ENCODE measurements at regions of chr16 and their contacts with region 1.

Region 1: GRCh38 chr16:78503602-78504001 is 404.1 kb downstream of the WWOX start:
- DNase-seq: peak in 3 of 10 donors; percentile 55 to 66 (median 57)

Region 2: GRCh38 chr16:78122774-78123315 is 380.8 kb before region 1 on chr16:
- intact Hi-C with region 1: loop called (anchors 10 kb)
- DNase-seq: peak in 2 of 10 donors; percentile 37 to 49

Region 3: DNA sequence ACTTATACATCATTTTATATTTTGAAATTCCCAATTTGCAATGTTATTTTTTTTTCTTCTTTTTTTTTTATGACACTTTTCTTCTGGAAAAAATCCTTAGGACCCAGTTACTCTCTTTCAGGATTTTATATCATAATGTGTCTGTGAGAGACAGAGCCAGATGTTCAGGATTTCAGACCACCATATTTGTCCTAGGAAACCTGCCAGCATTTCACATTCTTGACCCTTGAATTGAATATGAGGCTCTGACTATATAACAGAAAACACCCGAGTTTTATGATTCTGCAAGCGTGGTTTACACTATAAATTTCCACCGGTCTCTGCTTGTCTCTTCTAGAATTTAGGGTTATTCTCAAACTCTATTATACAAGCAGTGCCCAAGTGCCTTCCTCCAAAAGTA is 216.8 kb after region 1 on chr16:
- intact Hi-C with region 1: no loop called
- DNase-seq: no peak

Region 4: GRCh38 chr16:78770353-78771091 is 266.9 kb after region 1 on chr16:
- intact Hi-C with region 1: loop called (anchors 1 kb)
- DNase-seq: peak in 9 of 10 donors; percentile 25 to 96 (median 70)

Region 5: DNA sequence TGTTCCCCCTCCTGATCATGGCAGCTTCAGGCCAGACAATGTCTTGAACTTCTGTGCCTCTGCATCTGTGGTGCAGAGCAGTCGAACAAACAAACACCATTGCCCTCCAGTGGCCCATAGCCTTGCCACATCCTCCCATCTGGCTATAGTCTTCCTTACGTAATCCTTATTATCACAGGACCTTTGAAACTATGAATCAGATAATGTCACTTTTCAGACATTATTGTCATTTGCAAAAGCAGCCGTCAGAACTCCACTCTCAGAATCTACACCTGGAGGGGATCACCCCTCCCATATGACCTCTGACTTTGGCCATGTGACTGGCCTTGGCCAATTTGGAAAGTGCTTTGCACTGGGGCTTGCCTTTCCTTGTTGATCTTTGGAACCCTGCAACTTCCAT is 709.6 kb after region 1 on chr16:
- intact Hi-C with region 1: loop called (anchors 10 kb)
- DNase-seq: no peak

Region 6: GRCh38 chr16:80084685-80085084 is 1581.1 kb after region 1 on chr16:
- intact Hi-C with region 1: loop called (anchors 10 kb)
- DNase-seq: peak in 4 of 10 donors; percentile 9 to 44 (median 21)

Region 7: GRCh38 chr16:80466024-80466987 is 1962.7 kb after region 1 on chr16:
- intact Hi-C with region 1: loop called (anchors 10 kb)
- DNase-seq: peak; percentile 52 to 95 (median 76)